Endothelial cell of umbilical vein (primary cell): ENCODE measurements at regions of chr16 and their contacts with region 1.

Region 1: DNA sequence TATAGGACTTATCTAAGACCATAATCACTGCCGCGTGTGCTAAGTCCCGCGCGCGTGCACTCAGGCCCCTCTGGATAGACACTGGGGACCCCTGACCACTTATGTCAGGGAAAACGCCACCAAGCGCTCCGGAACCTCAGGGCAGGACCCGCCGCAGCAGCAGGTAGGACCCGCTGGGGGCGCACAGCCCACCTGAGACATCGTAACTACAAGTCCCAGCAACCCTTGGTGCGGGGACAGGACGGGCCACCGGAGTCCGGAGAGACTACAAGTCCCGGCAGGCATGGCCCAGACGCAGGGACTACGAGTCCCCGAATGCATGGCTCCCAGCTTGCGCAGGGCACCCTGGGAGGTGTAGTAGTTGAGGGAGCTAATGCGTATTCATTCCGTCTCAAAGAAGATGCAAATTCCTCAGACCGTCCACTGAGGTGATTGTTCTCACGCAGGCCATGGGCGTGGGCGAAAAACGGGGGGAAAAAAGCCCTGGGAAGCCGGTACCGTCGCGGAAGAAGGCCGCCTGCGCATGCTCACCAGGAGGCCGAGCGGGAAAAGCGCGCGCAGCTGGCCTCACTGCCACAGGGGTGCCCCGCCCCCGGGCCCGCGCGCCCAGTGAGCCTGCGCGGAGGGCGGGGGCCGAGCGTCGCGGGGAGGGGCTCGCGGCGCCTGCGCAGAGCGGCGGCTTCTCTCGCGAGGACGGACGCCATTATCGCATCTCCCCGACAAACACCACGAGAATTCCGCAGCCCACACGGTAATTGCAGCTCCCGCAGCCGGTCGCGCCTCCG is at the start of gene BANP:
- DNase-seq: peak; percentile 98
- H3K4me3 ChIP-seq: peak within 1 kb of the TSS; percentile 68 to 81 (median 73)
- H3K27ac ChIP-seq: peak within 1 kb of the TSS; percentile 87
- H3K4me1 ChIP-seq: peaks cover 27% of the 10 kb centered on the region
- H3K27me3 ChIP-seq: no peaks in the 10 kb centered on the region
- CTCF ChIP-seq: peak; percentile 41 to 59
- POLR2A ChIP-seq: no peak
- total RNA-seq, gene BANP: 33.2 and 33.8 TPM in 2 replicates

Region 2: DNA sequence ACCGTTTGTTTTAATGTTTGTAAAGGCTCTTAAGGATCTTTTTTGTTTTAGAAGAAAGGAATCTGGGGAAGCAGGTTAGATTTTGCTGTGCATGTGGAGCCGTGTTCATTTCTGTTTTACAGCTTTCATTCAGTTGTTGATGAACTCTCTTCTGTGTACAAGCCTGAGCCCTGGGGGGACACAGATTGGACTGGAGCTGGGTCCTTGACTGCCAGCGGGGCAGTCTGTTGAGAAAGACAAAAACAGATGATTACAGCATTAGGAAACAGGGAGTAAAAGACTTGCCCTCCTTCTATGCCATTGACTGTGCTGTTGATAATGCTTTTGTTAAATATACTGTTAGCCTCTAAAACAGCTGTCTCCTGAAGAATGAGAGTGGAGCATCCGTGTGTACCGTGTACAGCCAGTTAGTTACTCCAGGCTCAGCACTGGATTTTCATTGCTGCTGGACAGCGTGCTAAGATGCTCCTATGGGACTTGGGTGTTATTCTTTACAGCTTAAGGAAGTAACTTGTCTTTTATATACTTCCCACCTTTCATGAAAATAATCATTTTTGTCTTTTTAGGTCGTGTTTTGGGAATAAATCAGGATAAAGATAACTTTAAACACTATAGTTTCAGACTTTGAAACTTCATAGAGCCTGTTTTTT is 555.6 kb before region 1 on chr16:
- CTCF ChIA-PET with region 1: no interaction called
- POLR2A ChIA-PET with region 1: no interaction called
- dilution Hi-C with region 1: no loop called
- intact Hi-C with region 1: no loop called
- DNase-seq: no peak
- H3K4me3 ChIP-seq: no peak overlapping the region
- H3K27ac ChIP-seq: no peak overlapping the region
- H3K4me1 ChIP-seq: peaks cover 16% of the 10 kb centered on the region
- H3K27me3 ChIP-seq: no peaks in the 10 kb centered on the region
- CTCF ChIP-seq: no peak
- POLR2A ChIP-seq: no peak

Region 3: DNA sequence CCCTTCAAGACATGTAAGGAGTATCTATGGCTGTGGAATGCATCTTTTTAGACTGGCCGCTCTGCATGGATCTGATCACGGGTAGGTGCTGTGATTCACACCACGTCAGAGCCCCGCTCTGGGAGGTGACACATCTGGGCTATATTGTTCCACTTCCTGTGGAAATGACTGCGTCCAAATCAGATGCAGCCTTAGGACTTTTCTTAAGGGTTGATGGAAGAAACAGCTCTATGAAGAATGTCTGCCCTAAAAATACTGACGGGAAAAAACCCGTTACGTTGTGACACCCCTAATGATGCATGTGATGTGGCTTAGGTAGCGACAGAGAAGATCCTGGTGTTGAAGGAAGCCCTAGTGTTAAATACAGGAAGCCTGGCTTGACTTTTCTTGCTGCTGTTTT is 12.4 kb after region 1 on chr16:
- CTCF ChIA-PET with region 1: interaction called, 7 read pairs
- POLR2A ChIA-PET with region 1: interaction called, 3 read pairs
- dilution Hi-C with region 1: no loop called
- intact Hi-C with region 1: loop called (anchors 1 kb)
- DNase-seq: peak; percentile 93
- H3K4me3 ChIP-seq: peak overlapping the region in 1 of 3 experiments; percentile 18
- H3K27ac ChIP-seq: peak overlapping the region; percentile 94
- H3K4me1 ChIP-seq: peaks cover 32% of the 10 kb centered on the region
- H3K27me3 ChIP-seq: no peaks in the 10 kb centered on the region
- CTCF ChIP-seq: no peak
- POLR2A ChIP-seq: peak; percentile 17

Region 4: GRCh38 chr16:88569985-88570690 is 619.2 kb after region 1 on chr16 and contains the start of gene ZC3H18:
- CTCF ChIA-PET with region 1: no interaction called
- POLR2A ChIA-PET with region 1: no interaction called
- dilution Hi-C with region 1: no loop called
- intact Hi-C with region 1: loop called (anchors 10 kb)
- DNase-seq: peak; percentile 97
- H3K4me3 ChIP-seq: peak within 1 kb of the TSS; percentile 71 to 89 (median 73)
- H3K27ac ChIP-seq: peak within 1 kb of the TSS; percentile 44
- H3K4me1 ChIP-seq: peaks cover 14% of the 10 kb centered on the region
- H3K27me3 ChIP-seq: no peaks in the 10 kb centered on the region
- CTCF ChIP-seq: no peak
- POLR2A ChIP-seq: peak; percentile 86
- total RNA-seq, gene ZC3H18: 52.8 and 59.6 TPM in 2 replicates